Endothelial cell of umbilical vein (primary cell): ENCODE measurements at regions of chrX and their contacts with region 1.

Region 1: GRCh38 chrX:57918750-57919436 is 8.6 kb upstream of the ZXDA start:
- DNase-seq: peak; percentile 30
- H3K4me3 ChIP-seq: no peak overlapping the region
- H3K27ac ChIP-seq: no peak overlapping the region
- H3K4me1 ChIP-seq: no peaks in the 10 kb centered on the region
- H3K27me3 ChIP-seq: no peaks in the 10 kb centered on the region
- CTCF ChIP-seq: peak; percentile 24 to 36
- POLR2A ChIP-seq: no peak

Region 2: GRCh38 chrX:57906790-57907189 is 12.1 kb before region 1 on chrX:
- CTCF ChIA-PET with region 1: interaction called, 10 read pairs
- POLR2A ChIA-PET with region 1: no interaction called
- dilution Hi-C with region 1: no loop called
- intact Hi-C with region 1: no loop called
- DNase-seq: peak; percentile 71
- H3K4me3 ChIP-seq: peak overlapping the region in 1 of 3 experiments; percentile 70
- H3K27ac ChIP-seq: peak overlapping the region; percentile 83
- H3K4me1 ChIP-seq: peaks cover 34% of the 10 kb centered on the region
- H3K27me3 ChIP-seq: no peaks in the 10 kb centered on the region
- CTCF ChIP-seq: no peak
- POLR2A ChIP-seq: no peak

Region 3: DNA sequence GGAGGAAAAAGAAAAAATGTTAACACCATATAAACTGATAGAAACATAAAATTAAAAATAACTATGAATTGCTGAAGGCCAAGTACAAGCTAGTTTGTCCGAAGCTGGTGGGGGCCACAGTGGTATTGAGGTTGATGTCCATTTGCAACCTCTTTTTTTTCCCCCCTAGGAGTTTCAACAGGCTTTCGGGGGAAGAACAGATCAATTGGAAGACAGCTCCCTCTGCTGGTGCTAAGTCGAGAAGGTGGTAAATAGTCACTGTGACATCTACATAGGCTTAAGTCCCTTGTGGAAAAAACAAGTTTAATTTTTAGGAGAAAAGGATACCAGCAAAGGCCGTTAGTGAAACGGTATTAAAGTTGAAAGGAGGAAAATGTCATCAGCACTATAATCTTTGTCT is 107.1 kb after region 1 on chrX:
- CTCF ChIA-PET with region 1: no interaction called
- POLR2A ChIA-PET with region 1: no interaction called
- dilution Hi-C with region 1: no loop called
- intact Hi-C with region 1: loop called (anchors 2 kb)
- DNase-seq: peak; percentile 19
- H3K4me3 ChIP-seq: no peak overlapping the region
- H3K27ac ChIP-seq: no peak overlapping the region
- H3K4me1 ChIP-seq: no peaks in the 10 kb centered on the region
- H3K27me3 ChIP-seq: no peaks in the 10 kb centered on the region
- CTCF ChIP-seq: peak; percentile 14 to 36
- POLR2A ChIP-seq: no peak